ENCODE measurements at regions of chr10 and their contacts with region 1.

Region 1: GRCh38 chr10:102432162-102432950 is at the start of gene CUEDC2:
- DNase-seq: peak; percentile 98
- ATAC-seq: peak; percentile 93
- H3K4me3 Mint-ChIP-seq: peak within 1 kb of the TSS; percentile 95
- H3K27ac Mint-ChIP-seq: peak within 1 kb of the TSS; percentile 94
- H3K4me1 Mint-ChIP-seq: peaks cover 42% of the 10 kb centered on the region
- H3K27me3 Mint-ChIP-seq: no peaks in the 10 kb centered on the region
- CTCF ChIP-seq: no peak
- total RNA-seq, gene CUEDC2: 71.8 to 76.4 TPM

Region 2: DNA sequence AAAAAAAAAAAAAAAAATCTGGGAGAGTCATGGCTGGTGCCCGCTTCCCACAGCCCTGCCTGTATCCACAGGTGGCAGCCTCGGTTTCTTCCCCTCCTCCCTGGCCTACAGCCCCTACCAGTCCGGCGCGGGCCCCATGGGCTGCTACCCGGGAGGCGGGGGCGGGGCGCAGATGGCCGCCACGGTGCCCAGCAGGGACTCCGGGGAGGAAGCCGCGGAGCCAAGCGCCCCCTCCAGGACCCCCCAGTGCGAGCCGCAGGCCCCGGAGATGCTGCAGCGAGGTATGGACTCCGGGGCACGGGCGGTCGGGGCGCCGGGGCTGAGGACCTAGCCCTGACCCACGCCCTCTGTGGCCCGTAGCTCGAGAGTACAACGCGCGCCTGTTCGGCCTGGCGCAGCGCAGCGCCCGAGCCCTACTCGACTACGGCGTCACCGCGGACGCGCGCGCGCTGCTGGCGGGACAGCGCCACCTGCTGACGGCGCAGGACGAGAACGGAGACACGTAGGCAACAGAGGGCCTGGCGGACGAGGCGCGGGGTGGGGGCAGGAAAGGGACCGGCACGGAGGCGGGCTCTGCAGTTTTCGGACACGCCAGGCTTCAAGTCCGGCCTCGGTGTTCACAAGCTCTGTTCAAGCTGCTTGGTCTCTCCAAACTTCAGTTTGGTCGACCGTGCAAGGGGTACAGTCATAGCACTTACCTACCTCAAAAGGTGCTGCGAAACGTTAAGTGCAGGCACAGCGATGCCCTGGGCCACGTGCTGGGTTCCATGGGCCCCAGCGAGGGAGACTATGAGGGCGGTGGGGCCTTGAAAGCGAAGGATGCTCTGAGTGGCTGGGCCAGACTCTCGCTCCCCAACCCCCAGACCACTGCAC is 32.9 kb before region 1 on chr10:
- CTCF ChIA-PET with region 1: interaction called, 9 read pairs
- POLR2A ChIA-PET with region 1: interaction called, 16 read pairs
- intact Hi-C with region 1: no loop called
- DNase-seq: peak; percentile 92
- ATAC-seq: peak; percentile 58
- H3K4me3 Mint-ChIP-seq: peak overlapping the region; percentile 93
- H3K27ac Mint-ChIP-seq: peak overlapping the region; percentile 86
- H3K4me1 Mint-ChIP-seq: peaks cover 47% of the 10 kb centered on the region
- H3K27me3 Mint-ChIP-seq: no peaks in the 10 kb centered on the region
- CTCF ChIP-seq: peak; percentile 98

Region 3: GRCh38 chr10:102461187-102462054 is 29.1 kb after region 1 on chr10:
- CTCF ChIA-PET with region 1: interaction called, 3 read pairs
- POLR2A ChIA-PET with region 1: interaction called, 15 read pairs
- intact Hi-C with region 1: no loop called
- DNase-seq: peak; percentile 95
- ATAC-seq: peak; percentile 96
- H3K4me3 Mint-ChIP-seq: peak overlapping the region; percentile 91
- H3K27ac Mint-ChIP-seq: peak overlapping the region; percentile 80
- H3K4me1 Mint-ChIP-seq: peaks cover 27% of the 10 kb centered on the region
- H3K27me3 Mint-ChIP-seq: no peaks in the 10 kb centered on the region
- CTCF ChIP-seq: no peak

Region 4: GRCh38 chr10:102652170-102652916 is 220.0 kb after region 1 on chr10:
- CTCF ChIA-PET with region 1: no interaction called
- POLR2A ChIA-PET with region 1: no interaction called
- intact Hi-C with region 1: no loop called
- DNase-seq: peak; percentile 57
- ATAC-seq: peak; percentile 55
- H3K4me3 Mint-ChIP-seq: peak overlapping the region; percentile 63
- H3K27ac Mint-ChIP-seq: peak overlapping the region; percentile 90
- H3K4me1 Mint-ChIP-seq: peaks cover 77% of the 10 kb centered on the region
- H3K27me3 Mint-ChIP-seq: no peaks in the 10 kb centered on the region
- CTCF ChIP-seq: no peak

Measured in activated CD8-positive, alpha-beta T cell treated with anti-CD3 and anti-CD28 coated beads for 36 hours (primary cell).